Stomach (tissue), 19 donors: ENCODE measurements at regions of chr15 and their contacts with region 1.

Region 1: GRCh38 chr15:68550481-68551295 is 28.1 kb upstream of the CORO2B start:
- DNase-seq: peak; percentile 82 to 88
- H3K4me3 ChIP-seq: no peak overlapping the region
- H3K27ac ChIP-seq: no peak overlapping the region
- H3K4me1 ChIP-seq: peaks cover 0 to 6% (median 0%) of the 10 kb centered on the region in 4 donors
- H3K27me3 ChIP-seq: peaks cover 0 to 41% (median 4%) of the 10 kb centered on the region in 3 donors
- CTCF ChIP-seq: peak in 6 of 7 experiments; percentile 41 to 98 (median 88)
- EP300 ChIP-seq: no peak
- POLR2A ChIP-seq: no peak

Region 2: GRCh38 chr15:68672781-68673205 is 122.1 kb after region 1 on chr15:
- intact Hi-C with region 1: loop called (anchors 5 kb)
- DNase-seq: no peak
- H3K4me3 ChIP-seq: no peak overlapping the region
- H3K27ac ChIP-seq: no peak overlapping the region
- H3K4me1 ChIP-seq: peaks cover 0 to 11% (median 3%) of the 10 kb centered on the region in 4 donors
- H3K27me3 ChIP-seq: peaks cover 0 to 15% (median 0%) of the 10 kb centered on the region in 3 donors
- CTCF ChIP-seq: no peak
- EP300 ChIP-seq: no peak
- POLR2A ChIP-seq: no peak